GM13976 (cell line): ENCODE measurements at regions of chr7 and their contacts with region 1.

Region 1: DNA sequence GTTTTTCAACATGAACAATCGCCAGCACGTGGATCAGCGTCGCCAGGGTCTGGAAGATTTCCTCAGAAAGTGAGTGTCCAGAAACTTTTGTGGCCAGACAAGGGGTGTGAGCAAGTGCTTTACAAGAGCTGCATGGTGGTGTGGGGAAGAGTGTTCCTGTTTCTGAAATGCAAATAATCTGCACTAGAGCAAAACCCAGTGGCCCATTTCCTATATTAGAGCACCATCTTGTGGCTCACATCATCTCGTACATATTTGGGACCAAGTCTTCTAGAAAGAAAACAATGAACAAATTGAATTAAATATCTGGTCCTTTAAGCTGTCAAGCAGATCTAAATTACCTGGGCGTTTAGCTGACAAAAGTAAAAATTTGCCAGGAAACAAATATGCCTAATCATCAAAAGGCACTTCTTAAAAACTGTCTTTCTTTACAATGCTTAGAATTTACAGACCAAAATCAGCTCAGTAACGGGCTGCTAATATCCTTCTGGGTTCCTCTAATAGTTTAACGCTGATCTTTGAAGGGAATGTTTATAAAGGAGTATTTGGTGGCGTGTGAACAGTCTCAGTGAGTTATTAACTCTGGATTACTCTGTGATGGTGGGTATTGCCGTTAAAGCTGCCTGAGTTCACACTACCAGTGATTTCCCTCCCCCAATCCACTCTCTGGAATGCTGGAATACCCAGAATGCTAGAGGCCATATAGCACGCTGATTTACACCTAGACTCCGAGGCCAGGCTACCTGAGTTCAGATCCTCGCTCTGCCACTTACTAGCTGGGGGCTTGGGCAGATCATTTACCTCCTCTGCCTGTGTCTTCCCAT is 73.6 kb downstream of the SNX10 start:
- DNase-seq: peak; percentile 41
- CTCF ChIP-seq: peak; percentile 60

Region 2: DNA sequence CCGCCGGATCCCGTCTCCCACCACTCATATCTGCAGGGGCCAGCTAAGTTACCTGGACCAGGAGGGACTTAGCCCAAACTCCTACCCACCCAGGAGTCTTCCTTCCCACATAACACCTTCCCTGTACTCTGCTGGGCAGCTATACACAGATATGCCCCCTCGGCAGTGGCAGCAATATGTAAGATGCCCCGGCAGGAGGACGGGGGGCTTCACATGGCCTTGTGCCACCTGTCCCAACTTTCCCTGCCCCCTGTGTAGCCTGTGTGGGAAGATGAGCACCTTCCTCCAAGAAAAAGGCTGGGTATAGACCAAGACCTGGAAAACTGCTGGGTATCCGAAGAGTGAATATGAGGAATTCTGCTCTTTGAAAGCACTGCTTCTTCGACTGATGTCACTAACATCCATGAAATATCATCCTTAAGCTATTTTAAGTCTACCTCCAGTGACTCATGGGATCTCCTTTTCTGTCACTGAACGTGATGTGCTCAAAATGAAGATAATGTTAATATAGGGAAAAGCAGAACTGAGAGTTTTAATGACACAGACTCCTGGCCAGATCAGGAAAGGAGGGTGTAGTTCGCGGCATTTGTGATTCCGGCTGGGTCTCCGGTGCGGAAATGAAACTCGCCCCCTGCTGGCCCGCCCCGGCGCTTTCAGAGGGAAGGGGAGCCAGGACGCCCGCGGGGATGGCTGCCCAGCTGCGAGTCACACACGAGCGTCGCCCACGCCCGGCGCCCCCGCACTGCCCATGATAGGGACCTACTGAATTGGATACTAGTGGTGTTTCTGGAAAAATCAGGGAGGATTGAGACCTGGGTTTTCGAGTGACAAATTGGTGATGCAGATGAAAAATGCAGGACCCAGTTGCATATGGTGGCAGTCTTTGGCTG is 470.1 kb before region 1 on chr7:
- in situ Hi-C with region 1: loop called (anchors 5 kb)
- DNase-seq: peak; percentile 78
- CTCF ChIP-seq: peak; percentile 66

Region 3: GRCh38 chr7:26200444-26201246 is 164.6 kb before region 1 on chr7 and contains the start of gene HNRNPA2B1:
- in situ Hi-C with region 1: loop called (anchors 10 kb)
- DNase-seq: peak; percentile 85
- CTCF ChIP-seq: no peak

Region 4: GRCh38 chr7:26265065-26265464 is 100.2 kb before region 1 on chr7:
- in situ Hi-C with region 1: no loop called
- DNase-seq: no peak
- CTCF ChIP-seq: no peak